ENCODE measurements at regions of chr10 and their contacts with region 1.

Region 1: GRCh38 chr10:23067939-23068775 is 27.2 kb upstream of the MSRB2 start:
- DNase-seq: peak; percentile 79

Region 2: GRCh38 chr10:22573820-22574569 is 494.2 kb before region 1 on chr10:
- intact Hi-C with region 1: loop called (anchors 10 kb)
- DNase-seq: no peak

Region 3: DNA sequence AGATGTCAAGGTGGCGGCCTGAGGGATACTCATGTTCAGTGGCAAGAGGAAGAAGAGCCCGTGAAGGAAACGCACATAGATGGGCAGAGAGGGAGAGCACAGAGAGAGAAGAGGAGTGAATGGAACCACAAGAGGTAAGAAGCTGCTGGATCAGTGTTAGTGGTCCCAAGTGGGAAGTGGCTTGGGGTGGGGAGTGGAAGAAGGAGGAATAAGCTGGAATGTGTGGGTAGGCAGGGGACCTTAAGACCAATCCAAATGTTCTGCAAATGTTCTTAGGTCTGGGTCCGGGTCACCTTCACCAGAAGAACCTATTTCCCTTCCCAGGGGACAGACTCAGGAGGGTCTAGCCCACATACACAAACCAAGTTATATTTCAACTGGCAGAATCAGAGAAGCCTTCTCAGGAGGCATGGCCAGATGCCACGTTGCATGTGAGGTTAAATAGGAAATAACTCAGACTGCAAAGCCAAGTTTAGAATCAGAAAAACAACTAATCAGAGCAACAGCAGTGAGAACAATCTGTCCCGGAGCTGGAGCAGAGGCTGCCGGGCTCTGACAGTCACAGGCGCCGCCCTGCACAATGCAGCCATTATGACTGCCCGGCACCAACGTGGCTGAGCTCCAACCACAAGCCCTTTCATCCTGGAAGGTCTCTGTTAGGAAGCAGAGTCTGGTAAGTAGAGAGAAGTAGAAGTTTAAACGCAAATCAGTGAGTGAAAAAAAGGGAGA is 218.9 kb before region 1 on chr10:
- intact Hi-C with region 1: loop called (anchors 10 kb)
- DNase-seq: peak; percentile 85

Region 4: DNA sequence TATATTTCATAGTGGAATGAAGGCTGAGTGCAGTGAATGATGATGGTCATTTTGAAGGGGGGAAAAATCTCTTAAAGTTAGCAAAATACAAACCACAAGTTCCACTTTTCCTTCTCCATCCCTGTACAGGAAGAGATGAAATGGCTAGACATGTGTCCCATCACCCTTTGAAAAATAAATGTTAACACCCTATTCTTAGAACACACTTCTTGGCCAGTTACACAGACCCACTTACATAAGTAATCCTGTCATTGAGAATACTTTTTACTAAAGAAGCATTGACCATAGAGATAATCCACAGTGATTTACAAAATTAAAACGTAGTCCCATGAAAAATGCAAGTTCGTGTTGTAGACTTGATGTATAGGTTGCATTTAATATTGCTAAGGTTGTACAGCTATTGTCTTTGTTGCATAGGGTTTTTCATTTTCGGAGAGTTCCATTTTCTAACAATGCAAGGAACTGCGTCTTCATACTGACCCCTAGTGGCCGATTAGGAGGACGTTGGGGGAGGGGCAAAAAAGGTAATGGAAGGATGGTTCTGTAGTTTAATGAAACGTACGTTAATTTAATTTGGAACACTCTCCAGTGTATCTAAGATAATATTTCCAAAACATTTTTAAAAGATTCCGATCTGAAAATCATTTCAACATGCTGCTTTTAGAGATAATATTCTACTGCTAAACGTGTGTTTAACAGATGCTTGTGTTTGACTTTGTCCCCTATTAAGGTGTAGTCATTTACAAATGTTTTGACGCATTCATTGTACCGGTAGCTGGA is 79.4 kb before region 1 on chr10:
- intact Hi-C with region 1: loop called (anchors 5 kb)
- DNase-seq: no peak

Region 5: GRCh38 chr10:23120001-23120934 is 52.1 kb after region 1 on chr10:
- intact Hi-C with region 1: no loop called
- DNase-seq: no peak

Measured in cardiac septum (tissue), 1 donor.